WTC11 (cell line): ENCODE measurements at regions of chr3 and their contacts with region 1.

Region 1: GRCh38 chr3:185702262-185703225 is 116.4 kb downstream of the SENP2 start:
- DNase-seq: no peak
- ATAC-seq: peak; percentile 76
- H3K4me3 Mint-ChIP-seq: peak overlapping the region; percentile 12
- H3K27ac Mint-ChIP-seq: peak overlapping the region; percentile 89
- H3K4me1 Mint-ChIP-seq: peaks cover 37% of the 10 kb centered on the region
- H3K27me3 Mint-ChIP-seq: no peaks in the 10 kb centered on the region
- CTCF ChIP-seq: no peak

Region 2: GRCh38 chr3:185687271-185687878 is 15.2 kb before region 1 on chr3:
- CTCF ChIA-PET with region 1: no interaction called
- POLR2A ChIA-PET with region 1: no interaction called
- DNase-seq: no peak
- ATAC-seq: no peak
- H3K4me3 Mint-ChIP-seq: no peak overlapping the region
- H3K27ac Mint-ChIP-seq: no peak overlapping the region
- H3K4me1 Mint-ChIP-seq: no peaks in the 10 kb centered on the region
- H3K27me3 Mint-ChIP-seq: no peaks in the 10 kb centered on the region
- CTCF ChIP-seq: no peak

Region 3: DNA sequence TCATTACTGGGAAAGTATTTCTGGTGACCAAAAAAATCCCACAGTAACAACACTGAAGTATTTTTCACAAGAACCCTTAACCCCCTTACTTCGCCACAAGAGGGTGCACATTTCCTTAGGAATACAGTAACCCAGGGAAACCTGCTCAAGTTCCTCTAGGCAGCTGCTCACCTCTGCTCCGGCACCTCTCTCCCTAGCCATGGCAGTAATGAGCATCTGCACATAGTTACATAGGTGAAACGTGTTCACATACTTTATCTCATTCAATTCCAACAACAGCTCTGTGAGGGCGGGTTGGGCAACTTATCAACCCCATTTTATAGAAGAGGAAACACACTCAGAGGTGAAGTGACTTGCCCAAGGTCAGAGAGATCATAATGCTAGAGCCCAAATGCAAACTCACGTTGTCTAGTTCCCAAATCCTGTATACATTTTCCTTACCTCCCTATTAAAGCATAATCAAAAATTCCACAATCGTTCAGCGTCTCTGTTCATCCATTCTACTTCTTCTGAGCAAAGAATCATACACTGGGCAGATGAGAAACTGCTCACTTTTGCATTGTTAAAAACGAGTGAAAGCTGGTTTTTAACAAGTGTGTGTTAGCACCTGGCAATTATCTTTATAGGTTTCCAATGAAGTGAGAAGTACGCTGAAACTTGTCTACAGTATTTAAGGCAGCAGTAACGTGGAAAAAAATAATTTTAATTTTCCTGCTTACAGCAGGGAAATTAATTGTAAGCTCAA is 31.6 kb after region 1 on chr3:
- CTCF ChIA-PET with region 1: interaction called, 11 read pairs
- POLR2A ChIA-PET with region 1: no interaction called
- DNase-seq: peak; percentile 65
- ATAC-seq: peak; percentile 95
- H3K4me3 Mint-ChIP-seq: no peak overlapping the region
- H3K27ac Mint-ChIP-seq: peak overlapping the region; percentile 95
- H3K4me1 Mint-ChIP-seq: peaks cover 65% of the 10 kb centered on the region
- H3K27me3 Mint-ChIP-seq: no peaks in the 10 kb centered on the region
- CTCF ChIP-seq: peak; percentile 46; the same call in 1 of the 2 replicates